Natural killer cell (primary cell): ENCODE measurements at regions of chr2 and their contacts with region 1.

Region 1: GRCh38 chr2:231557571-231558237 is 27.5 kb upstream of the NMUR1 start:
- DNase-seq: peak; percentile 48 to 92
- ATAC-seq: peak; percentile 82 to 86 (median 83)
- H3K4me3 ChIP-seq: no peak overlapping the region
- H3K4me3 Mint-ChIP-seq: peak overlapping the region; percentile 61
- H3K27ac ChIP-seq: peak overlapping the region; percentile 43
- H3K27ac Mint-ChIP-seq: peak overlapping the region; percentile 90 to 100
- H3K4me1 ChIP-seq: peaks cover 48% of the 10 kb centered on the region
- H3K4me1 Mint-ChIP-seq: peaks cover 50% of the 10 kb centered on the region in 2 donors
- H3K27me3 ChIP-seq: no peaks in the 10 kb centered on the region
- H3K27me3 Mint-ChIP-seq: no peaks in the 10 kb centered on the region
- CTCF ChIP-seq: peak; percentile 79

Region 2: DNA sequence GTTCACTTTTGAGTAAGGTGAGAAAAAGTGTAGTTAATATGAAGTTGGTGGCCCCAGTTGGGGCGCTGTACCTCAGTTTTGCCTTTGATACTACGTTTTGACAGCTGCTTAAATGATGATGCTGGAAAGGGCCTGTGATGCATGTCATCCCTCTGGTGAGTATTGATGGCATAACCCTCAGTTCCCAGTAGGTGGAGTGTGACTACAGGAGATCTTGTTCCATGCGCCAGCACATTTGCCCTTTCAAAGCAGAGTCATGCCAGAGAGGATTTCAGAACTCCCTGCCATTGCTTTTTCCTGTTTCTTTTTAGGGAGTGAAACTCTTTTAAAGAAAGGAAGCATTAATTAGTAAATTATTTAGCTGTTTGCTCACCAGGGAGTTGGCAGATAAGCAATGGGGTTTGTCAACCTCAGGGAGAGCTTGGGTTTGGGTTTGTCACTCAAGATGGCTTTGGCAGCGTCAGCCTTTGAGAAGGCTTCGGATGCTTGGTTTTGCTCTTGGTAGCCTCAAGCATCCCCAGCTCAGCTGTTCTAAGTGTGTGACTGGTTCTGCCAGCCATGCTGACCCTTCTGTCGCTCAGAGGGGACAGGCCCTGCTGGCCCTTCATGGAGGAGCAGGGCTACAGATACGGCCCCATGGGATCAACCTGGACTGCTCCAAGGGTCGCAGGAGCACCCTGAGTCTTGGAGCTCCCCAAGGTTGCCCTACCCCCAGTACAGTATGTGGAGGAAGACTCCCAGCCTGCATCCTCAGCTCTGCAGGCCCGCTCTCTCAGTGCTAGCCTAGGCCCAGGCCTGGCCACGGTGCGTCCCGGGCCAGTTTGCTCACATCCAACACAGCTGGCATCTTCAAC is 330.2 kb before region 1 on chr2:
- intact Hi-C with region 1: loop called (anchors 5 kb)
- DNase-seq: peak; percentile 25 to 72
- ATAC-seq: peak; percentile 93 to 100 (median 99)
- H3K4me3 ChIP-seq: no peak overlapping the region
- H3K4me3 Mint-ChIP-seq: no peak overlapping the region
- H3K27ac ChIP-seq: no peak overlapping the region
- H3K27ac Mint-ChIP-seq: no peak overlapping the region
- H3K4me1 ChIP-seq: no peaks in the 10 kb centered on the region
- H3K4me1 Mint-ChIP-seq: no peaks in the 10 kb centered on the region
- H3K27me3 ChIP-seq: no peaks in the 10 kb centered on the region
- H3K27me3 Mint-ChIP-seq: no peaks in the 10 kb centered on the region
- CTCF ChIP-seq: peak; percentile 80

Region 3: DNA sequence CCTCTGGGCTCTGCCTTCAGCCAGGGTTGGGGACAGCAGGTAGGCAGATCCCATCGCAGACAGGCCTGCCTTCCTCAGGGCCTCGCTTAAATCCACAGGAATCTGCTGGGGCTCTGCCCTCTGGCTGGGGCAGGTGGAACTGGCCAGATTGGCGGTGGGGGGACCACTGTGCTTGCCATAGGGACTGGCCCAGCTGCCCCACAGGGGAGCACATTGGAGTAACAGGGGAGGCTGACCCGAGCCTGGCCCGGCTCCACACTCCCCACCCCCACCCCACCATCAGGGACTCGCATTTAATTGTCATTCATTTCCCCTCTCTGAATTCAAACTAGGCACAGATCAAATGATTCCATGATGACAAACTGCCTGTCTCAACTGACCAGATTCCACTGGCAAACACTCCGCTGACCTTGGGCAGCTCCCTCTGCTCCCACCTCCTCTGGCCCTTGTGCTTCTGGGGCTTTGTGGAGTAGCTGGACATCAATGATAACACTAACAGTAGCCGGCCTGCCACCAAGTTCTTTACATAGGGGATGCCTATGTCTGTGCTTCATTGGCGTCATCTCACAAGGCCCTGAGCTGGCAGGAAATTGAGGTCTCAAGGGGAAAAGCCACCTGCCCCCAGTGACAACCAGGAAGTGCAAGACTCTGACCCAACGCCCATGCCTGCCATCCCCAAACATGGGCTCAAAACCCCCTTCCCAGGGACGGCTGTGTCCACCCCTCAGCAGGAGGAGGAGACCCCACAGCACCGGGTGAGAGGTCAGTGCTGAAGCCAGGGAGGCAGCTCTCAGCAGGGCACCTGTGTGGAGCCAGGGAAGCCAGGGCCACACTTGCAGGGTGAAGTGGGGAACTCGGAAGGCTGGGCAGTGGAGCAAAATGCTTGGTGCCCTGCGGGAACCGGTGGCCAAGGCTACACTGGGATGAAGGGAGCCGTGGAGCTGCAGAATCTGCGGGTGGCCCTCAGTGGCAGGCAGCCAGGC is 164.3 kb before region 1 on chr2:
- intact Hi-C with region 1: no loop called
- DNase-seq: peak; percentile 66 to 78
- ATAC-seq: peak; percentile 43 to 69 (median 63)
- H3K4me3 ChIP-seq: peak overlapping the region; percentile 56
- H3K4me3 Mint-ChIP-seq: peak overlapping the region; percentile 97
- H3K27ac ChIP-seq: peak overlapping the region; percentile 99
- H3K27ac Mint-ChIP-seq: peak overlapping the region; percentile 99 to 100
- H3K4me1 ChIP-seq: peaks cover 89% of the 10 kb centered on the region
- H3K4me1 Mint-ChIP-seq: peaks cover 69 to 82% of the 10 kb centered on the region in 2 donors
- H3K27me3 ChIP-seq: no peaks in the 10 kb centered on the region
- H3K27me3 Mint-ChIP-seq: no peaks in the 10 kb centered on the region
- CTCF ChIP-seq: no peak

Region 4: GRCh38 chr2:231482806-231483391 is 74.8 kb before region 1 on chr2:
- intact Hi-C with region 1: loop called (anchors 1 kb)
- DNase-seq: peak; percentile 53 to 83
- ATAC-seq: peak; percentile 83
- H3K4me3 ChIP-seq: peak overlapping the region; percentile 54
- H3K4me3 Mint-ChIP-seq: peak overlapping the region; percentile 73
- H3K27ac ChIP-seq: peak overlapping the region; percentile 82
- H3K27ac Mint-ChIP-seq: peak overlapping the region; percentile 77 to 85
- H3K4me1 ChIP-seq: peaks cover 21% of the 10 kb centered on the region
- H3K4me1 Mint-ChIP-seq: peaks cover 0 to 15% of the 10 kb centered on the region in 2 donors
- H3K27me3 ChIP-seq: no peaks in the 10 kb centered on the region
- H3K27me3 Mint-ChIP-seq: no peaks in the 10 kb centered on the region
- CTCF ChIP-seq: peak; percentile 58

Region 5: GRCh38 chr2:231514103-231514950 is 43.4 kb before region 1 on chr2:
- intact Hi-C with region 1: loop called (anchors 1 kb)
- DNase-seq: peak; percentile 97 to 99
- ATAC-seq: peak; percentile 96 to 99 (median 96)
- H3K4me3 ChIP-seq: peak overlapping the region; percentile 78
- H3K4me3 Mint-ChIP-seq: peak overlapping the region; percentile 91
- H3K27ac ChIP-seq: peak overlapping the region; percentile 98
- H3K27ac Mint-ChIP-seq: peak overlapping the region; percentile 98 to 99
- H3K4me1 ChIP-seq: peaks cover 10% of the 10 kb centered on the region
- H3K4me1 Mint-ChIP-seq: peaks cover 16 to 19% of the 10 kb centered on the region in 2 donors
- H3K27me3 ChIP-seq: no peaks in the 10 kb centered on the region
- H3K27me3 Mint-ChIP-seq: no peaks in the 10 kb centered on the region
- CTCF ChIP-seq: no peak

Region 6: DNA sequence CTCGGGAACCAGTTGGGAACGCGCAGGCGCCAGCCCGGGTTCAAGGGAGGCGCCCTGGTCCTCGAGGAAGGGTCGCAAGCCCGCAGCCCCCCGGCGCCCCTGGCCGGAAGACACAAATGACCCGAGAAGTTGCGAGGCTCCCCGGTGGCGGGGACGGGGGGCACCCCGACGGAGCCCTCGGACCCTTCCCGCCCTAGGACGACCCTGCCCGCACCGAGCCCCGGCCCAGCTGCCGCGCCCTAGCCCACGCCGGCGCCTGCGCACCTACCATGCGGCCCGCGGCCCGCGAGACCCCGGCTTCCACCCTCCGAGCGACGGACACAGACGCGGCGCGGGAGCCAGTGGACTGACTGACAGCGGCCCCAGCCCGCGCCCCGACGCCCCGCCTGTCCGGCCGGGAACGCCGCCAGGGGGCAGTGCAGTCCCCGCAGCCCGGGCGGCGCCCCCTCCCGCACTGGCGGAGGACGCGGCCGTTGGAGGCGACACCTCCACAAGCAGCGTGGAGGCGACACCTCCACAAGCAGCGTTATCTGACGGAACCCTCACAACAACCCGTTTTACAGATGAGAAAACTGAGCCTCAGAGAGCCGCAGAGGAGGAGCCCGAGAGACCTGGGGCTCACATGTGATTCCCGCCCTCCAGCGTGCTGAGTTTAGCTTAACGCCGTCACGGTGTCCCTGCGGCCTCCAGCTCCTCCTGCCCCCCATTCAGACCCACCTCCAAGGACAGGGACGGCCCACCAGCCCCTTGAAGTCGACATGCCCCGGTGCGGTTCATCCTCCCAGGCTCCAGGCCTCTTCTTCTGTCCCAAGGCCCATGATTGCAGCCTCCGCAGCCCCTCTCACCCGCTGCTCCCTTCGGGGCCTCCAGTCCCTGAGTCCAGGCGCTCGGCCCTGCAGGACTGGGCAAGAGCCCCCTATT is 27.4 kb before region 1 on chr2 and contains the start of gene NMUR1:
- intact Hi-C with region 1: loop called (anchors 1 kb)
- DNase-seq: peak; percentile 89 to 91
- ATAC-seq: peak; percentile 83 to 92 (median 83)
- H3K4me3 ChIP-seq: peak within 1 kb of the TSS; percentile 61
- H3K4me3 Mint-ChIP-seq: peak within 1 kb of the TSS; percentile 95
- H3K27ac ChIP-seq: peak within 1 kb of the TSS; percentile 81
- H3K27ac Mint-ChIP-seq: peak within 1 kb of the TSS; percentile 93 to 96
- H3K4me1 ChIP-seq: peaks cover 66% of the 10 kb centered on the region
- H3K4me1 Mint-ChIP-seq: peaks cover 73 to 81% of the 10 kb centered on the region in 2 donors
- H3K27me3 ChIP-seq: no peaks in the 10 kb centered on the region
- H3K27me3 Mint-ChIP-seq: no peaks in the 10 kb centered on the region
- CTCF ChIP-seq: peak; percentile 95
- total RNA-seq, gene NMUR1: 67.4 to 103 (median 80.2) TPM

Region 7: DNA sequence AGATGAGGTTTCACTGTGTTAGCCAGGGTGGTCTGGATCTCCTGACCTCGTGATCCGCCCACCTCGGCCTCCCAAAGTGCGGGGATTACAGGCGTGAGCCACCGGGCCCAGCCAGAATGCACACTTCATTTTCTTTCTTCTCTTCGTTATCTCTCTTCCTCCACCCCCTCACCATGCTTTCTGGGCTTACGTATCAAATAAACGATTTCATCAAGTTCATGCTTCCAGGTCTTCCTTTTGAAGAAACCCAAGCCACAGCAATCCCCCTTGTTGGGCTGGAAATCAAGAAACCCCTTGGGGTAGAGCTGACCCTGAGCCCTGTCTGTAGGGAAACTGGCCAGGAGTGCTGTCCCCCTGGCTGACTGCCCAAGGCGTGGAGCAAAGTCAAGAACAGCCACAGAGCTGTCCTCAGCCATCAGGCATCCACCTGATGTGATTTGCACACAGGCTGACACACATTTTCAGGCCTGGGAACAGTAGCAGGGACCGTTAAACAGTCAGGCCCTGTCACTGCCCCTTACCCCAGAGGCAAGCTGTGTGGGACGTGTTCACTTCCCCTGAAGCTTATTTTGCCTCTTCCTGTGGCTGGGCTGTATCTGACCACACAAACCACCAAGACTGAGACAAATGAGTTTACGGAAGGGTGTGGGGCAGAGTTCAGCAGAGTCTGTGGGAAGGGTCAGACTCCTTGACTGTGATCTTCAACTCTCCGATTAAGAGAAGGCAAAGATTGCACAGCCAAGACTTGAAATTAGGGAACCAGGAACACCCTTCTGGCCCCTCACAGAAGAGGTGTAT is 12.4 kb before region 1 on chr2:
- intact Hi-C with region 1: loop called (anchors 1 kb)
- DNase-seq: peak; percentile 62 to 63
- ATAC-seq: peak; percentile 83 to 93 (median 92)
- H3K4me3 ChIP-seq: no peak overlapping the region
- H3K4me3 Mint-ChIP-seq: peak overlapping the region; percentile 88
- H3K27ac ChIP-seq: peak overlapping the region; percentile 84
- H3K27ac Mint-ChIP-seq: peak overlapping the region; percentile 94 to 99
- H3K4me1 ChIP-seq: peaks cover 82% of the 10 kb centered on the region
- H3K4me1 Mint-ChIP-seq: peaks cover 61 to 74% of the 10 kb centered on the region in 2 donors
- H3K27me3 ChIP-seq: no peaks in the 10 kb centered on the region
- H3K27me3 Mint-ChIP-seq: no peaks in the 10 kb centered on the region
- CTCF ChIP-seq: no peak

Region 8: DNA sequence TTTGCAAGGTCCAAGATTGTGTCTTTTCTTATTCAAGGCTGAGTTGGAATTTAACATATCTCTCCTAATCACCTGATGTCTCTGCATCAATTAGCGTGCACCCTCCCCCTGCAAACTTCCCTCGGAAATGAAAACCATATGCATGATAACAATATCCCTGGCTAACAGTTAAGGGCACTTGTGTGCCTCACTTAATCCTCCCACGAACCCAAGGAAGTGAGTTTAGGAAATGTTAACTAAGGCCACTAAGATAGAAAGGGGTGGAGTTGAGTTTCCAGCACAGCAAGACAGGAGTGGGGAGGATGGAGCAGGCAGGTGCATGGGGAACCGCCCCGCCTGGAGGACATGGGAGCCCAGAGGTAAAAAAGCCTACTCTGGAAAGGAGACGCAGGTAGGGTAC is 98.2 kb after region 1 on chr2:
- intact Hi-C with region 1: no loop called
- DNase-seq: no peak
- ATAC-seq: no peak
- H3K4me3 ChIP-seq: no peak overlapping the region
- H3K4me3 Mint-ChIP-seq: no peak overlapping the region
- H3K27ac ChIP-seq: no peak overlapping the region
- H3K27ac Mint-ChIP-seq: no peak overlapping the region
- H3K4me1 ChIP-seq: no peaks in the 10 kb centered on the region
- H3K4me1 Mint-ChIP-seq: no peaks in the 10 kb centered on the region
- H3K27me3 ChIP-seq: no peaks in the 10 kb centered on the region
- H3K27me3 Mint-ChIP-seq: no peaks in the 10 kb centered on the region
- CTCF ChIP-seq: no peak